ENCODE measurements at regions of chr14 and their contacts with region 1.

Region 1: DNA sequence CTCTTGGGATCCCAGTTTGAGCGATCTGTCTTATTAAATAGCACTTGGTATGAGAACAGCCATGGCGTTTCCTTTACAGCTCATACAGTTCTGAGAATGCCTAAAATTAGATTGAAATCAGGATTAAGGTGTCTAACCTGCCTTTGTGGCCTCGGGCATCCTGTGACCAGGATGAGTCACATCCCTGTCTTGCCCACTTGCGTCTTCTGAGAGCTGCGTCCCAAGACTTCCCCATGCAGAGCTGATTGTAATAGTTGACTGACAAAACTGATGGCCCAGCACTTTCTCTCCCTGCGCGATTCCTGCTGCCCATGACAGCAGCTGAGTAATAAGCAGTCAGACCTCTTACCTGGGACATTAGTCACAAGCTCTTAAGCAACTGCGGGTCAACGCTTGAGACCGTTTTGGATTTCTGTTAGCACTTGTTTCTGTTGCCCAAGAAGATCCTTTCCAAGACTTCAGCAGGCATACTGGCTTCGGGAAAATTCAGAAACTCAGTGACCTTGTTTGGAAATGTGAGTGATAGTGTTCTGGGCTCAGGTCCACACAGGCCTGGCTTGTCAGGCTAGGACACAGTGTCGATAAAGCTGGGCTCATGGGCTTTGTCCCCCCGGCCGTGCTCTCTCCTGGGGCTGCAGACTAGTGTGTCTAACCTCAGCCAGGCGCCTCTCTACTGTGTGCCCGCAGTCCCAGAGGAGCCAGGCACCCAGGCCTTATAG is 169.9 kb upstream of the HIF1A start:
- DNase-seq: peak; percentile 84 to 90
- ATAC-seq: peak; percentile 73
- H3K4me3 ChIP-seq: no peak overlapping the region
- H3K27ac ChIP-seq: peak overlapping the region; percentile 38 to 62
- H3K4me1 ChIP-seq: peaks cover 0 to 5% of the 10 kb centered on the region in 2 donors
- H3K27me3 ChIP-seq: no peaks in the 10 kb centered on the region

Region 2: GRCh38 chr14:61505815-61506804 is 19.3 kb before region 1 on chr14:
- intact Hi-C with region 1: loop called in 1 of 2 experiments (anchors 2 kb)
- DNase-seq: peak in 1 of 2 donors; percentile 55
- ATAC-seq: peak; percentile 81
- H3K4me3 ChIP-seq: no peak overlapping the region
- H3K27ac ChIP-seq: peak overlapping the region; percentile 72 to 95
- H3K4me1 ChIP-seq: peaks cover 4% of the 10 kb centered on the region in 2 donors
- H3K27me3 ChIP-seq: no peaks in the 10 kb centered on the region

Region 3: GRCh38 chr14:61547186-61548086 is 22.0 kb after region 1 on chr14:
- intact Hi-C with region 1: loop called in 1 of 2 experiments (anchors 2 kb)
- DNase-seq: peak in 1 of 2 donors; percentile 77
- ATAC-seq: peak; percentile 53
- H3K4me3 ChIP-seq: no peak overlapping the region
- H3K27ac ChIP-seq: peak overlapping the region in 1 of 2 donors; percentile 42
- H3K4me1 ChIP-seq: peaks cover 7 to 9% of the 10 kb centered on the region in 2 donors
- H3K27me3 ChIP-seq: no peaks in the 10 kb centered on the region